ENCODE measurements at regions of chr10 and their contacts with region 1.

Region 1: GRCh38 chr10:77188521-77188920 is 449.1 kb downstream of the KCNMA1 start:
- DNase-seq: no peak
- ATAC-seq: no peak
- H3K4me3 ChIP-seq: no peak overlapping the region
- H3K27ac ChIP-seq: no peak overlapping the region
- H3K4me1 ChIP-seq: no peaks in the 10 kb centered on the region
- H3K27me3 ChIP-seq: peaks cover 0 to 2% (median 0%) of the 10 kb centered on the region in 3 donors
- CTCF ChIP-seq: no peak

Region 2: GRCh38 chr10:77214799-77215198 is 26.3 kb after region 1 on chr10:
- intact Hi-C with region 1: loop called in 1 of 2 experiments (anchors 2 kb)
- DNase-seq: no peak
- ATAC-seq: no peak
- H3K4me3 ChIP-seq: no peak overlapping the region
- H3K27ac ChIP-seq: no peak overlapping the region
- H3K4me1 ChIP-seq: no peaks in the 10 kb centered on the region
- H3K27me3 ChIP-seq: no peaks in the 10 kb centered on the region
- CTCF ChIP-seq: no peak

Region 3: DNA sequence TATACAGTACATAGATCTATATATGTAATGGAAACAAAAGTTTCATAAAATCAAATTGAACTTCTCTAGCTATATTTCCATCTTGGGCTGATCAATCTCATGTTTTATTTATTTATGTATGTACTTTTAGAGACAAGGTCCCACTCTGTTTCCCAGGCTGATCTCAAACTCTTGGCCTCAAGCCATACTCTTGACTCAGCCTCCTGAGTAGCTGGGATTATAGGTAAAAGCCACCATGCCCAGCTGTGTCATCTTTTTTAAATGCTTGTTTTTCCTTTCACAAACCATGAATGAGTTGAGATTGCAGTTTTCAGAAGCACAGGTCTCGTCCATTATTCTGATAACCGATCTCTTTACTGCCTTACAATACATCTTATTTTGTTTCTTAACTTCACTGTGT is 48.2 kb after region 1 on chr10:
- intact Hi-C with region 1: no loop called
- DNase-seq: no peak
- ATAC-seq: peak in 1 of 4 donors; percentile 50
- H3K4me3 ChIP-seq: no peak overlapping the region
- H3K27ac ChIP-seq: no peak overlapping the region
- H3K4me1 ChIP-seq: peaks cover 16% of the 10 kb centered on the region
- H3K27me3 ChIP-seq: no peaks in the 10 kb centered on the region
- CTCF ChIP-seq: no peak

Measured in psoas muscle (tissue), 8 donors.